K562 (cell line): ENCODE measurements at regions of chr5 and their contacts with region 1.

Region 1: GRCh38 chr5:103003872-103004271 is 116.1 kb downstream of the GIN1 start:
- DNase-seq: no peak
- ATAC-seq: no peak
- H3K4me3 ChIP-seq: no peak overlapping the region
- H3K27ac ChIP-seq: no peak overlapping the region
- H3K4me1 ChIP-seq: no peaks in the 10 kb centered on the region
- H3K27me3 ChIP-seq: no peaks in the 10 kb centered on the region
- CTCF ChIP-seq: no peak
- EP300 ChIP-seq: no peak
- POLR2A ChIP-seq: no peak
- RAD21 ChIP-seq: no peak

Region 2: GRCh38 chr5:102932781-102933180 is 71.1 kb before region 1 on chr5:
- CTCF ChIA-PET with region 1: no interaction called
- POLR2A ChIA-PET with region 1: no interaction called
- in situ Hi-C with region 1: loop called (anchors 5 kb)
- intact Hi-C with region 1: no loop called
- DNase-seq: no peak
- ATAC-seq: no peak
- H3K4me3 ChIP-seq: no peak overlapping the region
- H3K27ac ChIP-seq: no peak overlapping the region
- H3K4me1 ChIP-seq: no peaks in the 10 kb centered on the region
- H3K27me3 ChIP-seq: no peaks in the 10 kb centered on the region
- CTCF ChIP-seq: no peak
- EP300 ChIP-seq: no peak
- POLR2A ChIP-seq: no peak
- RAD21 ChIP-seq: no peak